Activated naive CD4-positive, alpha-beta T cell treated with anti-CD3 and anti-CD28 coated beads for 36 hours (primary cell): ENCODE measurements at regions of chr5 and their contacts with region 1.

Region 1: GRCh38 chr5:133868946-133869518 is 99.4 kb downstream of the C5orf15 start:
- DNase-seq: peak; percentile 93
- H3K4me3 Mint-ChIP-seq: no peak overlapping the region
- H3K27ac Mint-ChIP-seq: peak overlapping the region; percentile 44
- H3K4me1 Mint-ChIP-seq: peaks cover 40% of the 10 kb centered on the region
- H3K27me3 Mint-ChIP-seq: no peaks in the 10 kb centered on the region

Region 2: GRCh38 chr5:133364936-133365707 is 503.9 kb before region 1 on chr5:
- CTCF ChIA-PET with region 1: no interaction called
- intact Hi-C with region 1: loop called (anchors 5 kb)
- DNase-seq: peak; percentile 31
- H3K4me3 Mint-ChIP-seq: no peak overlapping the region
- H3K27ac Mint-ChIP-seq: no peak overlapping the region
- H3K4me1 Mint-ChIP-seq: no peaks in the 10 kb centered on the region
- H3K27me3 Mint-ChIP-seq: peaks cover 4% of the 10 kb centered on the region

Region 3: GRCh38 chr5:133489632-133490031 is 379.4 kb before region 1 on chr5:
- CTCF ChIA-PET with region 1: interaction called, 3 read pairs
- intact Hi-C with region 1: loop called (anchors 1 kb)
- DNase-seq: peak; percentile 74
- H3K4me3 Mint-ChIP-seq: no peak overlapping the region
- H3K27ac Mint-ChIP-seq: no peak overlapping the region
- H3K4me1 Mint-ChIP-seq: peaks cover 9% of the 10 kb centered on the region
- H3K27me3 Mint-ChIP-seq: no peaks in the 10 kb centered on the region

Region 4: DNA sequence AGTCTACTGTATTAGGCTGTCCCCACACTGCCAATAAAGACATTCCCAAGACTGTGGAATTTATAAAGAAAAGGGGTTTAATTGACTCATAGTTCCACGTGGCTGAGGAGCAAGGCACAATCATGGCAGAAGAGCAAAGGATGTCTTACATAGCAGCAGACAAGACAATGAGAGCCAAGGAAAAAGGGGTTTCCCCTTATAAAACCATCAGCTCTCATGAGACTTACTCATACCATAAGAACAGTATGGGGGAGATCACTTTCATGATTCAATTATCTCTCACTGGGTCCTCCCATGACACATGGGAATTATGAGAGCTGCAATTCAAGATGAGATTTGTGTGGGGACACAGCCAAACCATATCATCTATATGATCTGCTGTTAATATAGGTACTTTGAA is 241.9 kb before region 1 on chr5:
- CTCF ChIA-PET with region 1: no interaction called
- intact Hi-C with region 1: loop called (anchors 5 kb)
- DNase-seq: no peak
- H3K4me3 Mint-ChIP-seq: no peak overlapping the region
- H3K27ac Mint-ChIP-seq: no peak overlapping the region
- H3K4me1 Mint-ChIP-seq: peaks cover 5% of the 10 kb centered on the region
- H3K27me3 Mint-ChIP-seq: peaks cover 46% of the 10 kb centered on the region

Region 5: DNA sequence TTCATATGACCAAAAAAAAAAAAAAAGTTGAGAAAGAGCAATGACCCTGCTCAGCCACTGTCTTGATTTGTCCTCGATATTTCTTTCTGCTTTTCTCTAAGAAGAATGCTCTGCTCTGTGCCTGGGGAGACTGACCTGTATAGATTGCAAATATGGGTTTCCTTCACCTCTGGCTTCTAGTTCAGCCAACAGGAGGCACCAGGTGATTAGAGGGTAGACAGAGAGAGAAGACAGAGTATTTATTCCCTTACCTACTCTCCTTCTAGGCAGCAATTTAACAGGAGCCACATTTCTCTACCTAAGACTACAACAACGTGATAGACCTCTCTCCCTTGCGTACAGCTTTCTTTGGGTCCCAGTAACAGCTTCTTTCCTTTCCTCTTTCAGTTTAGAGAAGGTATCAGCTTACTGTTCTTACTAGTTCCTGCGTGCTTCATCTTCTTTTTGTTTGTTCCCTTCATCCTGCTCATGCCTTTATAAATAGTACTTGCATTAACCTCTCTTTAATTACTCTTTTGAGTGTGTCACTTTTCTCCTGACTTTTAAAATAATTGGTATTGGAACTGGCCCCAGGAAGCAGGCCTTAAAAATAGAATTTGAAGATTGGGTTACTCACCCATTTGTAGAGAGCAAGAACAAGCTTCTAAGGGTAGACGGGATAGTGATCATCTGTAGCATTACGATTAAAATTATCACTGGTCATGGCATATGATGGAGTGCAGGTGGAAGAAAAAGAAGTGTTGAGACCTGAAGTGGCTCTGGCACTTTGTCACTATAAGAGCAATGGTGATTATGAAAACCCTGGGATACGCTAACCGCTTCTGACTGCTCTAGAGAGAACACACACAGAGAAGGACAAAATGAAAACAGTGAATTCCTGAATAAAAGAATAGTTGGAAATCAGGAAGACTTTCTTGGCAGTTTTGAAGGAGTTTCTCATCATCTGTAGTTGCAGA is 95.5 kb before region 1 on chr5:
- CTCF ChIA-PET with region 1: no interaction called
- intact Hi-C with region 1: no loop called
- DNase-seq: no peak
- H3K4me3 Mint-ChIP-seq: no peak overlapping the region
- H3K27ac Mint-ChIP-seq: no peak overlapping the region
- H3K4me1 Mint-ChIP-seq: no peaks in the 10 kb centered on the region
- H3K27me3 Mint-ChIP-seq: peaks cover 8% of the 10 kb centered on the region

Region 6: GRCh38 chr5:133851521-133851920 is 17.5 kb before region 1 on chr5:
- CTCF ChIA-PET with region 1: interaction called, 12 read pairs
- intact Hi-C with region 1: no loop called
- DNase-seq: no peak
- H3K4me3 Mint-ChIP-seq: no peak overlapping the region
- H3K27ac Mint-ChIP-seq: no peak overlapping the region
- H3K4me1 Mint-ChIP-seq: peaks cover 4% of the 10 kb centered on the region
- H3K27me3 Mint-ChIP-seq: peaks cover 3% of the 10 kb centered on the region

Region 7: DNA sequence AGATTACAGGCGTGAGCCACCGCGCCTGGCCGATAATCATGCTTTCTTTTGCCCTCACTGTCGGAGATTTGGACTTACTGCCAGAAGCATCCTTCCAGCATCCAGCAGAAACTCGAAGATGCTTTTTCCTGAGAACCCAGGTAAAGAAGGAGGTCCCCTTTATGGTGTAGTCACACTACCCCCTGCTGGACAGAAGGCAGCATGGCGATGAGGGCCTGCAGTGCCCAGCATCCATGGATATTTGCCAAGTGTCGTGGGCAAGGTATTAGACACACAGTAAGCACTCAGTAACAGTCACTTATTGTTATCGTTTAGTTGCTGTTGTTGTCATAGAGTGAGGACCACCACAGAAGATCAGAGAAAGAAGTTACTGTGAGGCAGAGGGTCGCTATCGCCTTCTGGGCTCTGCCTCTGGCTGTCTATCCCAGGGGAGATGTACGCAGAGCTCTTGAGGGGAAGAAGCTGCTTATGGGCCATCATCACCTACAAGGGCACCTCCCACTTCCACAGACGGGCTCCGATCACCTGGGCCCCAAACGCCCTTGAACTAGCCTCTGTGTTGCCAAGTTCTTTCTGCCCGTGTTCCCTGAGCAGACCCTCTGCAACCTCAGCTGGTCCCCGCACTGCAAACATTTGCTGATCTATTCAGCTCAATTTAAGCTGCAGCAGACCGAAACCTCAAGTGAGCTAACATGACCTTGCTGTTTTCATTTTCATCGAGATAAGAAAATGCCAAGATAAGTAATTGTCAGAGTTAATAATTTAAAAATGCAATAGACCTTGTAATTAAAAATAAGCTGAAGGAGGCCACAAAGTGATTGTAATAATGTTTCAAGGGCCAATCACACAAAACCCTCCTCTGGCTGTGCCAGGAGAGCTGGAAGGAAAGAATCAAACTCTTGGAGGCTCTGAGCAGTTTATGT is 75.5 kb after region 1 on chr5:
- CTCF ChIA-PET with region 1: interaction called, 18 read pairs
- intact Hi-C with region 1: loop called (anchors 2 kb)
- DNase-seq: peak; percentile 75
- H3K4me3 Mint-ChIP-seq: no peak overlapping the region
- H3K27ac Mint-ChIP-seq: no peak overlapping the region
- H3K4me1 Mint-ChIP-seq: peaks cover 9% of the 10 kb centered on the region
- H3K27me3 Mint-ChIP-seq: no peaks in the 10 kb centered on the region

Region 8: GRCh38 chr5:134145779-134146581 is 276.9 kb after region 1 on chr5:
- CTCF ChIA-PET with region 1: no interaction called
- intact Hi-C with region 1: no loop called
- DNase-seq: peak; percentile 93
- H3K4me3 Mint-ChIP-seq: no peak overlapping the region
- H3K27ac Mint-ChIP-seq: peak overlapping the region; percentile 79
- H3K4me1 Mint-ChIP-seq: peaks cover 42% of the 10 kb centered on the region
- H3K27me3 Mint-ChIP-seq: no peaks in the 10 kb centered on the region

Region 9: DNA sequence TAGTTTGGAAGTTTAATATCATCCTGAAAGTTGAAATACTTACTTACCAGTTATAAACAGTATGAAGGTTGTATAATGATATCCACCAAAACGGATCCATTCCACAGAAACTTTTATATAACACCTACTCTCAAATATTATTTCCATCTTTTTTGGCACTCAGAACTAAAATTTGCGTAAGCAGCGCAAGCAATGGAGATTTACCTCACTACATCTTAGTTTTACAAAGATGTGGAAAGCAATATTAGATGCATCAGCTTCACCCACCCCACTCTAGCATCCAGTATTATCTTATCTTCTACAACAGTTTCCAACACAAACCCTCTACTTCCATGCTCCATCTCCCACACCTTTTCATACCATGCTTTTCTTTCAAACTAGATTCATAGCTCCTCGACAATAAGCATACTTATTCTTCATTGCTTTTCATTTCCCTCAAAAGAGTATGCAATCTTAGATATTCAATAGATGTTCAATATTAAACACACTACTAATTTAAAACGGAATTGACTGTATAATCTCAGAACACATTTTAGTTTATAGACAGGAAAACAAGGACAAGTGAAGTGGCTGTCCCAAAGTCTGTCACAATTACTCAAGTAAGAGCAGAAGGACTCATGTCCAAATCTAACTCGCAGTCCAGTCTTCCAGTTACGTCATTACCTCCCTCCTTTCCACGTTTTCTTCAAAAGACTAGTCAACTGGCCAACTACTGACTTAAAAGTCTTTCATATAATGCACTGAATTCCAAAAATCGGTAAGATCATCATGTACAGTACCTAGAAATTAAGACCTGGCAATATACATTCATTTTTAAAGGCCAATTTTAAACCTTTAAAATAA is 354.6 kb after region 1 on chr5:
- CTCF ChIA-PET with region 1: no interaction called
- intact Hi-C with region 1: no loop called
- DNase-seq: no peak
- H3K4me3 Mint-ChIP-seq: peak overlapping the region; percentile 96
- H3K27ac Mint-ChIP-seq: peak overlapping the region; percentile 79
- H3K4me1 Mint-ChIP-seq: peaks cover 73% of the 10 kb centered on the region
- H3K27me3 Mint-ChIP-seq: no peaks in the 10 kb centered on the region